ENCODE measurements at regions of chr1 and their contacts with region 1.

Region 1: GRCh38 chr1:33430692-33431593 is at the start of gene PHC2:
- DNase-seq: peak; percentile 80 to 96 (median 89)
- ATAC-seq: peak; percentile 95
- H3K4me3 ChIP-seq: peak within 1 kb of the TSS; percentile 31 to 47
- H3K4me3 Mint-ChIP-seq: peak within 1 kb of the TSS; percentile 77
- H3K27ac ChIP-seq: no peak within 1 kb of the TSS
- H3K27ac Mint-ChIP-seq: no peak within 1 kb of the TSS
- H3K4me1 ChIP-seq: no peaks in the 10 kb centered on the region
- H3K4me1 Mint-ChIP-seq: peaks cover 3% of the 10 kb centered on the region
- H3K27me3 ChIP-seq: no peaks in the 10 kb centered on the region
- H3K27me3 Mint-ChIP-seq: peaks cover 5% of the 10 kb centered on the region
- CTCF ChIP-seq: no peak
- total RNA-seq, gene PHC2: 39.7 to 40.4 TPM

Region 2: DNA sequence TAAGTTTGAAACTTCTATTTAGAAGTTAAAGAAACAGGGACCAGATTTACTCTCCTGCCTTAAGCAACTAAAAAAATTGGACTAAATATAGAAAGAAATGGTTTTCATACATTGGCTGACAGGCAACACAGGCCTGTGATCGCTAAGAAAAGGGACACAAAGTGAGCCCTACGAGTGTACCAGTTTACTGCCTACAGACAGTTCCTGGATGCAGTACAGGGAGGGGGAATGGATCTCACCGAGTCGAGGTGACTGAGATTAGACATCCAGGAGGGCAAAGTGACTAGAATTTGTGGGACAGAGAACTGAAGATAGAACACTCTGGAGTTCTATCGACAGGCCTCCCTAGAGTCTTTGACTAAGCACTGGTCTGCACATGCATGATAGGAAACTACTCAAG is 16.1 kb before region 1 on chr1:
- CTCF ChIA-PET with region 1: no interaction called
- POLR2A ChIA-PET with region 1: no interaction called
- intact Hi-C with region 1: no loop called
- DNase-seq: no peak
- ATAC-seq: no peak
- H3K4me3 ChIP-seq: no peak overlapping the region
- H3K4me3 Mint-ChIP-seq: no peak overlapping the region
- H3K27ac ChIP-seq: no peak overlapping the region
- H3K27ac Mint-ChIP-seq: no peak overlapping the region
- H3K4me1 ChIP-seq: no peaks in the 10 kb centered on the region
- H3K4me1 Mint-ChIP-seq: no peaks in the 10 kb centered on the region
- H3K27me3 ChIP-seq: no peaks in the 10 kb centered on the region
- H3K27me3 Mint-ChIP-seq: peaks cover 8% of the 10 kb centered on the region
- CTCF ChIP-seq: no peak

Region 3: DNA sequence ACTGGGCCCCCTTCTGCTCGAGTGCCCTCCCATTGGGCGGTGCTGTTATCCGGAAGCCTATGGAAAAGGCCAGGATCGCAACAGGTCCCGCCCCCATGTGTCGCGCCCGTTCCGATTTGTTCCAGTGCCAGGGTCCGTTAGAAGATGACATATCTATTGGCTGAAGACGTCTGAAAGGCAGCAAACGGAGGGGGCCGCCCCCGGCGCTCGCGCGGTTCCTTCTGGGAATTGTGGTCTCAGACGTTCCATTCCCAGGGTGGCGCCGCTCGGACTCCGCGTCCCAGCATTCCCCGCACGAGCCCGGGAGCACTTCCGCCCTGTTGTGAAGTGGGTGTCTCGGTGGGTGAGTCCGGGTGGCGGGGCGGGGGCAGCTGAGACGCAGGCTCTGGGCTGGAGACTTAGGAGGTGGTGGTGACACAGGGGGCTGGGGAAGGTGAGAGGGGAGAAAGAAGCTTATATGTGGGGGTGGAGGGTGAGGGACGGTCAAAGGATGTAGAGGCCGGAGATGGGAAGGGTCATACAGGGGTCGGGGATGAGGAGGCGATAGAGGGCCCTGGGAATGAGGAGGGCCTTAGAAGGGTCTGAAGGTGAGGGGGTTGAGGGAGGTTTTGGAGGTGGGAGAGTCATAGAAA is 41.5 kb after region 1 on chr1 and contains the start of gene ZSCAN20:
- CTCF ChIA-PET with region 1: interaction called, 3 read pairs
- POLR2A ChIA-PET with region 1: no interaction called
- intact Hi-C with region 1: loop called (anchors 1 kb)
- DNase-seq: peak; percentile 59 to 92 (median 84)
- ATAC-seq: peak; percentile 98
- H3K4me3 ChIP-seq: peak within 1 kb of the TSS; percentile 29 to 49
- H3K4me3 Mint-ChIP-seq: peak within 1 kb of the TSS; percentile 87
- H3K27ac ChIP-seq: peak within 1 kb of the TSS in 1 of 2 experiments; percentile 67
- H3K27ac Mint-ChIP-seq: peak within 1 kb of the TSS; percentile 80
- H3K4me1 ChIP-seq: peaks cover 10% of the 10 kb centered on the region
- H3K4me1 Mint-ChIP-seq: peaks cover 31% of the 10 kb centered on the region
- H3K27me3 ChIP-seq: no peaks in the 10 kb centered on the region
- H3K27me3 Mint-ChIP-seq: no peaks in the 10 kb centered on the region
- CTCF ChIP-seq: no peak
- total RNA-seq, gene ZSCAN20: 0.19 TPM

Region 4: DNA sequence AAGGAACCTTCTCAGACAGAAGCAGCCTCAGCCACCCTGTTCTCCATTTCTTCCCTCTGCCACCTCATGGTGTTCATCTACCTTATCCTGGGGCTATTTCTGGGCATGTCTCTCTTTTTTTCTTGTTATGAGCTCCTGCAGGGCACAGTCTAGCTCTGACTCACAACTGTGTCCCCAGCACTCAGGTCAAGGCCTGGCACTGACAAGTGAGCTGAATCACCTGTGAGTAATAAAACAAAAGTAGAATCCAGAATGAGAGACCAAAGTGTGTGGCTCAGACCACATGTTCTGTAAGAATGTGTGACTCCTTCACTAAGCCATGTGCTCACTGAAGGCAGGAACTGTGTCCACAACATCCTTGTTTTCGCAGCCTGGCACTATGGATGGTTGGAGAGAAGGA is 769.0 kb after region 1 on chr1:
- CTCF ChIA-PET with region 1: no interaction called
- POLR2A ChIA-PET with region 1: no interaction called
- intact Hi-C with region 1: no loop called
- DNase-seq: no peak
- ATAC-seq: no peak
- H3K4me3 ChIP-seq: no peak overlapping the region
- H3K4me3 Mint-ChIP-seq: no peak overlapping the region
- H3K27ac ChIP-seq: no peak overlapping the region
- H3K27ac Mint-ChIP-seq: no peak overlapping the region
- H3K4me1 ChIP-seq: no peaks in the 10 kb centered on the region
- H3K4me1 Mint-ChIP-seq: no peaks in the 10 kb centered on the region
- H3K27me3 ChIP-seq: no peaks in the 10 kb centered on the region
- H3K27me3 Mint-ChIP-seq: peaks cover 6% of the 10 kb centered on the region
- CTCF ChIP-seq: no peak

Measured in CD8-positive, alpha-beta T cell (primary cell).